ENCODE measurements at regions of chr2 and their contacts with region 1.

Region 1: DNA sequence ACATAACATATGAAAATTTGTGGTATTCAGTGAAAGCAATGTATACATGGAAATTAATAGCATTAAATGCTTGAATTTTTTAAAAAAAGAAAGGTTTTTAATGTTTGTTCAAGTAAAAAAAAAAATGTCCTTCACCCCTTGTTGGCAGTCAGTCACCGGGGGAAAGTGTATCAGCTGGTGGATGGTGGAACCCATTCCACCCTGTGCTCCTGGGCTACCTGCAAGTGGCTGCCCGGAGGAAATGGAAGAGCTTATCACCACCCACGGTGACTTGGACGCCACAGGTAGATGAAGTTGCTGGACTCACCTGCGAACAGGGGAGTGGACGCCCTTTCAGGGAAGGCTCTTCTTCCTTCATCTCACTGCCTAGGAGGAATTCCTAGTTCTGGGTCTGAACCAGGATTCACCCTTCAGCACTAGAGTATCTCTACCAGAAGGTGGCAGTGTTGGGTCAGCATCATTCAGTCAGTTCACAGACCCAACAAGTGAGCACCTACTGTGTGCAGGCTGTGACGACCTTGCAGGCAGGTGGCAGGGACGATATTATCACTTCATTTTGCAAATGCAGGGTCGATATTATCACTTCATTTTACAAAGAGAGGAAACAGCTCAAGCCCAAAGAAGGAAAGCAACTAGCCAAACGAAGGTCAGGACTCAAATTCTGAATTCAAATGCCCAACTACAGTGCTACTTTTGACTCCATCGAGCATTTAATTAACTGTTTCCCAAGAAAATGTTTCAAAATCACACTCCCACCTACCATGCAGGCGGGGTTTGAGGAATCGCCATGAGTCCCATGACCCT is 35.8 kb downstream of the CIB4 start:
- H3K4me3 ChIP-seq: no peak overlapping the region
- H3K27ac ChIP-seq: no peak overlapping the region
- H3K4me1 ChIP-seq: no peaks in the 10 kb centered on the region
- CTCF ChIP-seq: peak; percentile 65

Region 2: DNA sequence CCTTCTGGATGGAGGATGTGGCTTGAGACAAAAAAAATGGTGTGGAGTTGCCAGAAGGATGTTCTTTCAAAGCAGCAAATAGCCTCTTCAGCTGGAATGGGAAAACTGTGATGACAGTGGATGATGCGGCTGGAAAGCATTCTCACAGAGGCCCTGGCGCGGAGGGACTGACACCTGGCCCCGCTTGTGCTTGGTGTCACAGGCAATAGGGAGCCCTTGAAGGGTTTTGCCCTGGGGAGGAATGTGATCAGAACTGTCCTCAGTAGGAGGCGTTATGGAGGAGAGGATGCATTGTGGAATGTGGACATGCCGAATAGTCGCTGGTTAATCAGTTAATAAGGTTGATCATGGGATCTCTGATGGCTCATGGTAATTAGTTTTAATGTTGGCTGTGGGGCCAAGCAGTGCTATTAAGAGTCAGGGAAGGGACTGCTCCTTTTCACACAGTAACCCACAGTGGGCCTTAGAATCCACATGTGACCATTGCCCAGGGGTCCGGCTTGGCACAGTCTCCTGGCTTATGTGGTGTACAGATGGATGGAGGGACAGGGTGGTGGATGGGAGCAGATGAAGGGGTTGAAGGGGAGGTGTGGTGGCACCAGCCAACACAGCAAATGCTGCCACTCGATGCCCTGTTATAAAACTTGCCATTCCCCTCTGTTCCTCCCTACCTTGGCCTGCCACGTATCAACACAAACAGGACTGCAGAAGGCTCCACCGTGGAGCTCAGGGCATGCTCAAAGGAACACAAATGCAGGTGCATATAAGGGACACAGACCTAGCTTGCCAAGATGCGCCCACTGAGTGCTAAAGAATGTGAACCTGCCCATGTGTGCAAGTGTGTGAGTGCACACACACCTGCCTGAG is 35.9 kb before region 1 on chr2:
- CTCF ChIA-PET with region 1: no interaction called
- POLR2A ChIA-PET with region 1: no interaction called
- H3K4me3 ChIP-seq: no peak overlapping the region
- H3K27ac ChIP-seq: no peak overlapping the region
- H3K4me1 ChIP-seq: no peaks in the 10 kb centered on the region
- CTCF ChIP-seq: no peak

Region 3: DNA sequence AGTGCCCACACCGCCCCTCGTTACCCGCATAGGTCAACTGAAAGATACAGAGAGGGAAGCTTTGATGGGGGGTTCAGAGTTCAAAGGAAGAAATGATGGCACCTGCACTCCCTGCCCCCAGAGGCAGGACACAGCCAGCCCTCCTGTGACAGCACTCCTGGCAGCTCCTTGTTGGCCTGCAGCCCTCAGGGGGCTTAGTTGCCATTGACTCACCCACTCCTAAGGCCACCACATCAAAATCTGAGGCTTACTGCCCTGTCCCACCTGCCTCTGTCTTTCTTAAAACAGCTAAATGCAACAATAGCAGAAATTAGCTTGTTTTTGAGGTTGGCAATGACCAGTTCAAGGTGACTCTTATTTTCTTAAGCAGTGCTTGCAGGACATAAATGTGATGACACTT is 127.0 kb after region 1 on chr2:
- CTCF ChIA-PET with region 1: interaction called, 10 read pairs
- POLR2A ChIA-PET with region 1: interaction called, 4 read pairs
- H3K4me3 ChIP-seq: no peak overlapping the region
- H3K27ac ChIP-seq: no peak overlapping the region
- H3K4me1 ChIP-seq: no peaks in the 10 kb centered on the region
- CTCF ChIP-seq: no peak

Region 4: DNA sequence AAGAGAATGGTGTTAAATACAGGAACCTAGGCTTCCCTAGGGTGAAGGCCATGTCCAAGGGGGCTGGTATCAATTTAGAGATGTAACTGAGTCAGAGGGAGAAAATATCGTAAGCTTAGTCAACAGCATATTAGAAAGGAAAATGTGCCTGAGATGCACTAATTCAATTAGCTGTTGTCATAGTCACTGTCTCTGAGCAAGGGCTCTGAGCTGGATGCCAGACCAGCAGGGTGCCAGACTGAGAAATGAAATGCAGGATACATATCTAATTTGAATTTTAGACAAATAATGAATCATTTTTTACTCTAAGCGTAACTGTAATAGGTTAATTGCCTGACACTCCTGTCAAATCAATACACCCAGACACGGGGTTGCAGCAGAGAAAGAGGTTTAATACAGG is 147.3 kb after region 1 on chr2:
- CTCF ChIA-PET with region 1: interaction called, 198 read pairs
- POLR2A ChIA-PET with region 1: no interaction called
- H3K4me3 ChIP-seq: no peak overlapping the region
- H3K27ac ChIP-seq: no peak overlapping the region
- H3K4me1 ChIP-seq: no peaks in the 10 kb centered on the region
- CTCF ChIP-seq: no peak

Measured in HEK293 (cell line).